ENCODE measurements at regions of chr1 and their contacts with region 1.

Region 1: DNA sequence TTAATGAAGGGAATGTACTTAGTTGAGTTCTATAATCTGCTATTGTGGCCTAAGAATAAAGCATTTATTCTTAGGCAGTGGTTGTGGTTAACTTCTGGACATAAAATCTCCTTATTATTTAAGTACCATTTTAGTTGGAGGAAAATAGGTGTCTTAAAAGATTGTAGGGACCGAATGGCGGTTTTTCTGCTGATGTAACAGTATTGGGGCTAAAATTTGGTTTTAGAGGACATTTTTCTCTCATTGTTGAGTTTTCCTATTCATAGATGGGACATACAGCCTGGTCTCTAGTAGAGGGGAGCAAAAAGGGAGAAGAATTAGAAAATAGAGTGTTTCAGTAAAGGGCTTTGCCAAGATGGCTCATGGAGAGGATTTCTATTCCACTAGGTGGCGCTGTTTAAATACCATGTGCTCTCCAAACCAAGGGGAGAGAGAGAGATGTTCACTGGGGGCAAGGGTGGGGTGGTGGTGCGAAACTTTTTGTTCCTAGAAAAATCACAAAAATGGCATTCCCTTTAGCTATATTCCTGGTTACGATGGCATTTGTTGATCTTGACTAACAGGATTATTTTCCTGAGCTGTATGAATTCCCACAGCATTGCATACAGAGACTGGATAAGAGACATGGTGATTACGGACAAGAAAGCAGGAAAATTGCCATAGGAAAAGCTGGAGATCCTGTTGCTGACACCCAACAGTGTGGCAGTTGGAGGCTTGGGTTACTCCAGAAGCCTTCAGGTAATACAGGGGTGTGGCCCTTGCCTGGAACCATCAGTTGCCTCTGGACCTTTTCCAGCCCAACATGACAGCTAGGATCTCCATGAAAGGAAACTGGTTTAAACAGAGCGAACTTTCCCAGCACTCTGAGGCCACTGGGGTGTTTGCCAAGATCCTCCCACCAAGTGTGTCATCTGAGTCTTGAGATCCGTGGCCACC is 18.2 kb upstream of the FCGR2A start:
- DNase-seq: peak in 8 of 9 experiments; percentile 14 to 83 (median 46)
- ATAC-seq: peak; percentile 57
- H3K4me3 ChIP-seq: no peak overlapping the region
- H3K4me3 Mint-ChIP-seq: no peak overlapping the region
- H3K27ac ChIP-seq: no peak overlapping the region
- H3K27ac Mint-ChIP-seq: no peak overlapping the region
- H3K4me1 ChIP-seq: peaks cover 10% of the 10 kb centered on the region
- H3K4me1 Mint-ChIP-seq: peaks cover 11% of the 10 kb centered on the region
- H3K27me3 ChIP-seq: no peaks in the 10 kb centered on the region
- H3K27me3 Mint-ChIP-seq: peaks cover 23% of the 10 kb centered on the region
- CTCF ChIP-seq: peak; percentile 81

Region 2: DNA sequence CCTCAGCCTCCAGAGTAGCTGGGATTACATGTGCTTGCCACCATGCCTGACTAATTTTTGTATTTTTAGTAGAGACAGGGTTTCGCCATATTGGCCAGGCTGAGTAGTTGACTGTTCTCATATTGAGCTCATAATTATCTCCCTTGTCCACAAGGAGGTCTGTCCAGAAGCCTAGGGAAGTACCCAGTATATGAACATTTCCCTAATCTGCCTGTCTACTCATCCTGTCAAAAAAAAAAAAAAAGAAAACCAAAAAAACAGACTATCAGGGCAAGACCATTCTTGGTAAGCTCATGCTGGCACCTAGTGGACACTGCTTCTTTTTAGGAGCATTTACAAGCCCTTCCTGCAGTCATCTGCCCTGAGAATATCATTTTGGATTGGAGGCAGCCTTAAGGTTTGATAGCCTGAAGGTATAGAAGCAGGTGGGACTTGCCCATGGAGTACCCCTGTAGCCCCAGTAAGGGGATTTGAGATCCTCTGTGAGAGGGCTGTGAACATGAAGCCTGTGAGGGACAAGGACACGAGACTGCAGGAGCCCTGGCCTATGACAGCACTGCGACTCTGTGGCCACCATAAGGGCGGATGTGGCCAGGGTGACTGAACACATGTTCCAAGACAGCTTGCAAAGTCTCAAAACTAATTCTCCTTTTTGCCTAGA is 251.7 kb after region 1 on chr1:
- CTCF ChIA-PET with region 1: interaction called, 11 read pairs
- POLR2A ChIA-PET with region 1: no interaction called
- intact Hi-C with region 1: loop called (anchors 1 kb)
- DNase-seq: peak in 8 of 9 experiments; percentile 43 to 87 (median 68)
- ATAC-seq: peak; percentile 83
- H3K4me3 ChIP-seq: no peak overlapping the region
- H3K4me3 Mint-ChIP-seq: no peak overlapping the region
- H3K27ac ChIP-seq: peak overlapping the region in 1 of 2 experiments; percentile 53
- H3K27ac Mint-ChIP-seq: peak overlapping the region; percentile 42
- H3K4me1 ChIP-seq: peaks cover 25% of the 10 kb centered on the region
- H3K4me1 Mint-ChIP-seq: peaks cover 26% of the 10 kb centered on the region
- H3K27me3 ChIP-seq: no peaks in the 10 kb centered on the region
- H3K27me3 Mint-ChIP-seq: no peaks in the 10 kb centered on the region
- CTCF ChIP-seq: peak; percentile 27

Region 3: GRCh38 chr1:162040681-162041080 is 553.6 kb after region 1 on chr1:
- CTCF ChIA-PET with region 1: no interaction called
- POLR2A ChIA-PET with region 1: no interaction called
- intact Hi-C with region 1: loop called in 1 of 2 experiments (anchors 1 kb)
- DNase-seq: no peak
- ATAC-seq: no peak
- H3K4me3 ChIP-seq: no peak overlapping the region
- H3K4me3 Mint-ChIP-seq: no peak overlapping the region
- H3K27ac ChIP-seq: no peak overlapping the region
- H3K27ac Mint-ChIP-seq: no peak overlapping the region
- H3K4me1 ChIP-seq: no peaks in the 10 kb centered on the region
- H3K4me1 Mint-ChIP-seq: peaks cover 2% of the 10 kb centered on the region
- H3K27me3 ChIP-seq: no peaks in the 10 kb centered on the region
- H3K27me3 Mint-ChIP-seq: peaks cover 17% of the 10 kb centered on the region
- CTCF ChIP-seq: no peak